Activated CD4-positive, alpha-beta memory T cell treated with anti-CD3 and anti-CD28 coated beads for 36 hours (primary cell): ENCODE measurements at regions of chr14 and their contacts with region 1.

Region 1: GRCh38 chr14:104130974-104131651 is 7.3 kb upstream of the KIF26A start:
- DNase-seq: peak; percentile 43
- H3K4me3 Mint-ChIP-seq: no peak overlapping the region
- H3K27ac Mint-ChIP-seq: no peak overlapping the region
- H3K4me1 Mint-ChIP-seq: no peaks in the 10 kb centered on the region
- H3K27me3 Mint-ChIP-seq: peaks cover 47% of the 10 kb centered on the region

Region 2: GRCh38 chr14:104094709-104095438 is 36.2 kb before region 1 on chr14:
- CTCF ChIA-PET with region 1: interaction called, 13 read pairs
- POLR2A ChIA-PET with region 1: no interaction called
- intact Hi-C with region 1: loop called (anchors 5 kb)
- DNase-seq: peak; percentile 82
- H3K4me3 Mint-ChIP-seq: no peak overlapping the region
- H3K27ac Mint-ChIP-seq: no peak overlapping the region
- H3K4me1 Mint-ChIP-seq: peaks cover 5% of the 10 kb centered on the region
- H3K27me3 Mint-ChIP-seq: peaks cover 3% of the 10 kb centered on the region

Region 3: DNA sequence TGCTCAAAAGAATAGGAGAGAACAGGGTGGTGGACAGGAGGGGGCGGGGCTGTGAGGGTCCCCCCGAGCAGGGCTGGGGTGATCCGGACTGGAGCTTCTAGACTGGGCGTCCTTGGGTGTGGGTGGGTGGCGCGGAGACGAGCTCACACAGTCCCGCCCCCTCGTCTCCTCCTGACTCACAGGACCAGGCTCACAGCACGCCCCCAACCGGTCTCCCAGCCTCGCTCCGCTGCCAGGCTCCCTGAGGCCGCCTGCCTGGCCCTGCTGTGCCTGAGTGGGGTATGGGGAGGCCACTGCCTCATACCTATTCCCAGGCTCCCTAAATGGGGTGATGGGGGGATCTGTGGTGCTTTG is 22.9 kb before region 1 on chr14:
- CTCF ChIA-PET with region 1: no interaction called
- POLR2A ChIA-PET with region 1: no interaction called
- intact Hi-C with region 1: no loop called
- DNase-seq: no peak
- H3K4me3 Mint-ChIP-seq: no peak overlapping the region
- H3K27ac Mint-ChIP-seq: no peak overlapping the region
- H3K4me1 Mint-ChIP-seq: no peaks in the 10 kb centered on the region
- H3K27me3 Mint-ChIP-seq: peaks cover 3% of the 10 kb centered on the region

Region 4: DNA sequence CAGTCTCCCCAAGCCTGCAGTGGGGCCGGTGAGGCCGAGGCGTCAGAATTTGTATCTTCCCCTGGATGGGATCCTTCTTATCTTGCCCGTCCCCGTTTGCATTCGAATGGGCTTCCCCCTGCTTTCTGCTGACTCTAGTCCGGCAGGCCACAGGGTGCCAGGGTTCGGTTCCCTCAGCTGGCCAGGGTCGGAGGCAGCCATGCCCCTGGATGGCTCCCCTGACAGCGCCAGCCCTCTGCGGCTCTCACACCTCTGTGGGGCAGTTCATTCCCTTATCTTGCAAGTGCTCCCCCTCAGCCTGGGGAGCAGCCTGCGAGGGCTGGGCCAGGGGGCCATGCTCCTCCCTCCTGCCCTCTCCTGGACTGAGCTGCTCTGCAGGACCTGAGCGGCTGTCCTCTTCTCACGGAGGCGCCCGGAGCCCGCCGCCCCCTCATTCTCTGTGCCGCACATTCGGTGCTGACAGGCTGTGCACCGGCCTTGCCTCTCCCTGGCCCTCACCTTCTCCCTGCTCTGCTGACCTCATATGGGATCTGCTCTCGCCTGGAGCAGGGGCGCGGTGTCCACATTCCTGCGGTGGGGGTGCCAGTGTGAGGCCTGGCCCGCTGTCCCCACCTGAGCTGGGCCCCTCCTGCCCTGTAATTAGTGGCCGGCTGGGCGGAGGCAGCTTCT is 40.0 kb after region 1 on chr14:
- CTCF ChIA-PET with region 1: no interaction called
- POLR2A ChIA-PET with region 1: no interaction called
- intact Hi-C with region 1: no loop called
- DNase-seq: no peak
- H3K4me3 Mint-ChIP-seq: no peak overlapping the region
- H3K27ac Mint-ChIP-seq: no peak overlapping the region
- H3K4me1 Mint-ChIP-seq: no peaks in the 10 kb centered on the region
- H3K27me3 Mint-ChIP-seq: no peaks in the 10 kb centered on the region